ENCODE measurements at regions of chr2 and their contacts with region 1.

Region 1: GRCh38 chr2:219160186-219161017 is at the start of gene NHEJ1:
- DNase-seq: peak; percentile 97 to 98
- H3K4me3 ChIP-seq: peak within 1 kb of the TSS; percentile 73
- H3K4me3 Mint-ChIP-seq: peak within 1 kb of the TSS; percentile 78
- H3K27ac Mint-ChIP-seq: peak within 1 kb of the TSS; percentile 84
- H3K4me1 ChIP-seq: peaks cover 11% of the 10 kb centered on the region; the same call in 1 of the 2 replicates
- H3K4me1 Mint-ChIP-seq: peaks cover 14% of the 10 kb centered on the region
- H3K27me3 ChIP-seq: no peaks in the 10 kb centered on the region
- H3K27me3 Mint-ChIP-seq: no peaks in the 10 kb centered on the region
- CTCF ChIP-seq: peak; percentile 98
- total RNA-seq, gene NHEJ1: 28.5 and 29.6 TPM in 2 replicates

Region 2: GRCh38 chr2:219177552-219178376 is 17.4 kb after region 1 on chr2 and contains the start of gene RETREG2:
- CTCF ChIA-PET with region 1: interaction called, 3 read pairs
- POLR2A ChIA-PET with region 1: interaction called, 3 read pairs
- intact Hi-C with region 1: loop called (anchors 1 kb)
- DNase-seq: peak; percentile 89 to 90
- H3K4me3 ChIP-seq: peak within 1 kb of the TSS; percentile 93
- H3K4me3 Mint-ChIP-seq: peak within 1 kb of the TSS; percentile 90
- H3K27ac Mint-ChIP-seq: peak within 1 kb of the TSS; percentile 89
- H3K4me1 ChIP-seq: peaks cover 12% of the 10 kb centered on the region
- H3K4me1 Mint-ChIP-seq: peaks cover 18% of the 10 kb centered on the region
- H3K27me3 ChIP-seq: no peaks in the 10 kb centered on the region; the same call in 1 of the 2 replicates
- H3K27me3 Mint-ChIP-seq: no peaks in the 10 kb centered on the region
- CTCF ChIP-seq: peak; percentile 17 to 38
- total RNA-seq, gene RETREG2: 59.5 and 62.0 TPM in 2 replicates

Region 3: DNA sequence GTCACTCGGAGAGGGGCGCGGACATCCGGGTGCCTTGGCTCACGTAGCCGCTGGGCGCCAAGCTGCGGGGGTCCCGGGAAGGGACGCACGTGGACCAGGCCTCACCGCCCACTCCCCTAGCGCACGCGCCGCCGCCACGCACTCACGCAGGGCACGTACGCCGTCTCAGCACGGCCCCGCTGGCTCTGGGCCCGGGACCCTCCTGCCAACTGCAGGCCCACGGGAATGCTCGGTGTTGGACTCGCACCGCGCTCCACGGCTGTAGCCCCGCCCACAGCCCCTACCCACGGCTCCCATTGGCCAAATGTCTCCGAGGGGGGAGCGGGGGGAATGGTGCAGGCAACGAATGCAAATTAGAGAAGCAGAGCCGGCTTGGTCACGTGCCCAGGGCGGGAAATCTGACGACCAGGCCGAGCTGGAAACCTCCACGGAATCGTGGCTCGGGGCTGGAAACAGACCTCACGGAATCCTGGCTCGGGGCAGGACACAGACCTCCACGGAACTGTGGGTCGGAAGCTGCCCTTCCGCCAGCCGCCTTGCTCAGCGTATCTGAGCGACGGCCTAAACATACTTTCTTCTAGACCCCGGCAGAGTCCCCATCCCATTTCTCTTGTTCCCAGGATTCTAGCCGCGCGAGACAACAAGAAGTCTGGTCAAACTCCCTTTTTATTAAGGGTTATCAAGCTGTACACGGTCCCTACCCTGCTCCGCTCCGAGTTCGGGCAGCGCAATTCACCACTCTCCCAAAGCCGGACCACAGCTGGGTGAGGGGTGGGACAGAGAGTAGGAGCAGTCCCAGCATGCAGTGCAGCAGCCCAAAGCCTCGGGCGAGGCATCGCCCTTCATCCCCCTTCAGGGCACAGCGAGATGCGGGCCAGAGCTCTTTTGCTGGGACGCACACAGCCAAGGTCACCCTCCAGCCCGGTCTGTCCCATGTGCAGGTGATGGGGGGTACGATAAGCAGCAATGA is 58.6 kb after region 1 on chr2 and contains the start of gene ABCB6:
- CTCF ChIA-PET with region 1: no interaction called
- POLR2A ChIA-PET with region 1: no interaction called
- intact Hi-C with region 1: loop called (anchors 1 kb)
- DNase-seq: peak; percentile 97
- H3K4me3 ChIP-seq: peak within 1 kb of the TSS; percentile 89
- H3K4me3 Mint-ChIP-seq: peak within 1 kb of the TSS; percentile 96
- H3K27ac Mint-ChIP-seq: peak within 1 kb of the TSS; percentile 95
- H3K4me1 ChIP-seq: peaks cover 18% of the 10 kb centered on the region
- H3K4me1 Mint-ChIP-seq: no peaks in the 10 kb centered on the region
- H3K27me3 ChIP-seq: no peaks in the 10 kb centered on the region
- H3K27me3 Mint-ChIP-seq: no peaks in the 10 kb centered on the region
- CTCF ChIP-seq: no peak
- total RNA-seq, gene ABCB6: 66.0 and 68.6 TPM in 2 replicates

Region 4: DNA sequence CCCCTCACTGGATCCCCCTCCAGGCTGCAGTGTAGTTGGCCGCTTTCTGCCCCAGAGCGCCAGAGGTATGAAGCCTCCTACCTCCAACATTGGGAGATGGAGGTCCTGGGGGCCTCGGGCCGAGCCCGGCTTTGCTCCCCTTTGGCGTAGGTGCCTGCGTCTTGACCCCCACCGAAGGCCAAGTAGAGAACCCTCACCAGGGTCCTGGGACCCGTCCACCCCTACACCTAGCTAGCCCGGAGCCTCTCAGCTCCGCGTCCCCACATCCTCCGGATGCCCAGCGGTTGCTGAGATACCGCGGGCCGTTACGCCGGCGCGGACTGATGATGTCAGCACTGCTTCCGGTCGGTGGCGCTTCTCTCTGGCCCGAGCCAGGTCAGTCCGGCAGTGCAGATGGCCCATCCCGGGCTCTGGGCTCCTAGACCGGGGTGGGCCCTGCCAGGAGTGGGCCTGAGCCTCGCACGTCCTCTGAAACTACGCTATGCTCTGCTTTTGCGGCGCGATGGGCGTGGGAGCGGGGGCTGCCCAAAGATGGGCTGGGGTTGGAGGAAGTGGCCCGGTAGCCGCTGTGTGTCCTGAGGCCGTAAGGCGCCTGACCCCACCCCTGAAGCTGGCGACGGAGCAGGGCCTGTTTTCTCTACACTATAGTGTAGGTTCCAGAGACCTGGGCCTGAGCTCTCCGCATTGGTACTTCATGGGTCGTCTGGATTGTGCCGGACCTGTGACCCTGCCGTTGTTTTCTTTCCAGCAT is 84.9 kb after region 1 on chr2 and contains the starts of genes GLB1L and STK16:
- CTCF ChIA-PET with region 1: no interaction called
- POLR2A ChIA-PET with region 1: no interaction called
- intact Hi-C with region 1: loop called (anchors 1 kb)
- DNase-seq: peak; percentile 94
- H3K4me3 ChIP-seq: peak within 1 kb of the TSS; percentile 73
- H3K4me3 Mint-ChIP-seq: peak within 1 kb of the TSS; percentile 82
- H3K27ac Mint-ChIP-seq: peak within 1 kb of the TSS; percentile 90
- H3K4me1 ChIP-seq: peaks cover 33% of the 10 kb centered on the region
- H3K4me1 Mint-ChIP-seq: peaks cover 23% of the 10 kb centered on the region
- H3K27me3 ChIP-seq: no peaks in the 10 kb centered on the region
- H3K27me3 Mint-ChIP-seq: no peaks in the 10 kb centered on the region
- CTCF ChIP-seq: no peak
- total RNA-seq, gene GLB1L: 3.3 and 4.3 TPM in 2 replicates
- total RNA-seq, gene STK16: 26.1 and 26.6 TPM in 2 replicates